PC-3 (cell line): ENCODE measurements at regions of chr17 and their contacts with region 1.

Region 1: GRCh38 chr17:78313735-78314648 is 45.9 kb downstream of the SOCS3 start:
- DNase-seq: peak; percentile 99
- ATAC-seq: peak; percentile 62
- H3K4me3 ChIP-seq: peak overlapping the region; percentile 68
- H3K27ac ChIP-seq: peak overlapping the region; percentile 96
- H3K4me1 ChIP-seq: peaks cover 45% of the 10 kb centered on the region
- H3K27me3 ChIP-seq: no peaks in the 10 kb centered on the region
- CTCF ChIP-seq: no peak

Region 2: DNA sequence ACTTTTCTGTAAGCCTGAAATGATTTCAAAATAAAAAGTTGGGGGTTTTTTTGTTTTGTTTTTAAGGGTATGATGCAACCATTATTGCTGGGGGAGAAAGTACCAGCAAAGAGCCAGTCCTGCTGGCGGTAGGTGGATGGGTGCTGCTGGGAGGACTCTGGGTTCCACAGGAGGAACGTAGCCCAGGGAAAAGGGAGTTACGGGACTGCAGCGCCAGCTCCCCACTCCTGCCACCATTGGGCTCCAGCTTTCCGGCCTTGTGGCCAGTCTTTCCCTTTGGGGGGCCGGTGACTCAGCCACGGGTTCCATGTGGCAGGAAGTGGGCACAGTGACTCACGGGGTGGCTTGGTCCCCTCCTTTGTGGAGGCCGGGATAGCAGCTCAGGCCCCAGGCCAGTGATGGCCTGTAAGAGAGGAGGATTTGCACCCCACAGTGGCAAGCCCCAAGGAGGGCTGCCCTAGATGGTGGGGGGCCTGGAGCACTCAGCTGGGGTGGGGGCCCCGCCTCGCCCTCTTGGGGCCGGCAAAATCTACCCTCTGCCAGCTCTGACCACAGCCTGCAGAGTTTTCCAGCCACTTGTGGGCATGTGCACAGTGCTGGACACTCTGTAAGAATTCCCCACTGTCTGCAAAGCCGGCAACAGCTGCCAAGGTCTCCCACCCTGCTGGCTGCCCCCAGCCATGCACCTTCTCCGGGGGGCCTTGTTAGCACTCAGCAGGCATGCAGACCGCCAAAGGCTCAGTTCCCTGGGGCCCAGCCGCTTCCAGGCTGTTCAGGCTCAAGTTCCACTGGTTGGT is 15.5 kb after region 1 on chr17:
- CTCF ChIA-PET with region 1: interaction called, 4 read pairs
- POLR2A ChIA-PET with region 1: interaction called, 6 read pairs
- intact Hi-C with region 1: loop called (anchors 1 kb)
- DNase-seq: peak; percentile 72
- ATAC-seq: peak; percentile 46
- H3K4me3 ChIP-seq: no peak overlapping the region
- H3K27ac ChIP-seq: peak overlapping the region; percentile 72
- H3K4me1 ChIP-seq: peaks cover 47% of the 10 kb centered on the region
- H3K27me3 ChIP-seq: no peaks in the 10 kb centered on the region
- CTCF ChIP-seq: no peak

Region 3: DNA sequence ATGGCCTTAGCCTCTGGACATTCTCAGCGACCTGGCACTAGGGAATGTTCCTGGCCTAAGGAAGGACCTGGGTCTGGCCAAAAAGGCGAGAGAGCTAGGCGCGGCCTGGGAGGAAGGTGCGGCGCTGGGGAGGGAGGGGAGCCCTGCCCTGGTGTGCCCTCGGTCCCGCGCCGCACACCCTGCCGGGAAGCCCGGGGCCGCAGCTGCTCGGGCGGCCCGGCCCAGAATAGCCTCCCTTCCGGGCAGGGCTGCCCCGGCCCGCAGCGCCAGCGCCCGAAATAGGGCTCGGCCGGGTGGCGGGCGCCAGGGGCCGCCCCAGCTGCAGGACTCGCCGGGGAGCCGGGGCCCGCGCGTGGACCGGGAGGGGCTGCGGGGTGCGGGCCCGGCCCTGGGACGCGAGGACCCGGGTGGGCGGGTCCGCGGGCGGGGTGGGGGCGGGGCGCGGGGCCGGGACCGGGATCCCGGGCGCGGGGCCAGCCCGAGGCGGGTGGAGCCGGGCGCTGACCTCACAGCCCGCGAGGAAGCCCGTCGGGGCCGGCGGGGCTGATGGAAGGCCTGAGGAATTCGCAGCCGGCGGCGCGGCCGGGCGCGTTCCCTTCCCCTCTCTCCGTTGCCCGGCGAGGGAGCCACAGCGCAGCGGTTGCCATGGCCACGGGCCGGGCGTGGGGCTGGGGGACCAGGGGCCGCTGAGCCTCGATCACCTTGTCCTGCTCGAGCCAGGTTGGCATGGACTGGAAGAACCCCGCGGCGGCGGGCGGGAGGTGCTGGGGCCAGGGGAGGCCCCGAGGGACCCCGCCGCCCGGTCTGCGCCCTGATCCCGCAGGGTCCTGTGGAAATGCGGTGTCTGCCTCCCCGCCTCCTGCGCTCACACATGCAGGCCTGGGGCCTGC is 27.8 kb after region 1 on chr17:
- CTCF ChIA-PET with region 1: interaction called, 4 read pairs
- POLR2A ChIA-PET with region 1: interaction called, 6 read pairs
- intact Hi-C with region 1: loop called (anchors 1 kb)
- DNase-seq: peak; percentile 82
- ATAC-seq: peak; percentile 36
- H3K4me3 ChIP-seq: peak overlapping the region; percentile 60
- H3K27ac ChIP-seq: peak overlapping the region; percentile 97
- H3K4me1 ChIP-seq: peaks cover 75% of the 10 kb centered on the region
- H3K27me3 ChIP-seq: no peaks in the 10 kb centered on the region
- CTCF ChIP-seq: no peak